ENCODE measurements at regions of chr10 and their contacts with region 1.

Region 1: GRCh38 chr10:93458821-93459257 is 23.3 kb downstream of the MYOF start:
- DNase-seq: peak; percentile 100
- H3K4me3 ChIP-seq: no peak overlapping the region
- H3K27me3 ChIP-seq: no peaks in the 10 kb centered on the region
- CTCF ChIP-seq: no peak

Region 2: GRCh38 chr10:92463582-92463981 is 995.3 kb before region 1 on chr10:
- CTCF ChIA-PET with region 1: no interaction called
- POLR2A ChIA-PET with region 1: interaction called, 11 read pairs
- DNase-seq: no peak
- H3K4me3 ChIP-seq: no peak overlapping the region
- H3K27me3 ChIP-seq: no peaks in the 10 kb centered on the region
- CTCF ChIP-seq: no peak

Region 3: GRCh38 chr10:93330824-93331223 is 128.0 kb before region 1 on chr10:
- CTCF ChIA-PET with region 1: no interaction called
- POLR2A ChIA-PET with region 1: no interaction called
- DNase-seq: no peak
- H3K4me3 ChIP-seq: no peak overlapping the region
- H3K27me3 ChIP-seq: no peaks in the 10 kb centered on the region
- CTCF ChIP-seq: no peak

Region 4: GRCh38 chr10:93437088-93437945 is 21.5 kb before region 1 on chr10:
- CTCF ChIA-PET with region 1: interaction called, 4 read pairs
- POLR2A ChIA-PET with region 1: interaction called, 20 read pairs
- DNase-seq: peak; percentile 99
- H3K4me3 ChIP-seq: no peak overlapping the region
- H3K27me3 ChIP-seq: no peaks in the 10 kb centered on the region
- CTCF ChIP-seq: no peak

Region 5: DNA sequence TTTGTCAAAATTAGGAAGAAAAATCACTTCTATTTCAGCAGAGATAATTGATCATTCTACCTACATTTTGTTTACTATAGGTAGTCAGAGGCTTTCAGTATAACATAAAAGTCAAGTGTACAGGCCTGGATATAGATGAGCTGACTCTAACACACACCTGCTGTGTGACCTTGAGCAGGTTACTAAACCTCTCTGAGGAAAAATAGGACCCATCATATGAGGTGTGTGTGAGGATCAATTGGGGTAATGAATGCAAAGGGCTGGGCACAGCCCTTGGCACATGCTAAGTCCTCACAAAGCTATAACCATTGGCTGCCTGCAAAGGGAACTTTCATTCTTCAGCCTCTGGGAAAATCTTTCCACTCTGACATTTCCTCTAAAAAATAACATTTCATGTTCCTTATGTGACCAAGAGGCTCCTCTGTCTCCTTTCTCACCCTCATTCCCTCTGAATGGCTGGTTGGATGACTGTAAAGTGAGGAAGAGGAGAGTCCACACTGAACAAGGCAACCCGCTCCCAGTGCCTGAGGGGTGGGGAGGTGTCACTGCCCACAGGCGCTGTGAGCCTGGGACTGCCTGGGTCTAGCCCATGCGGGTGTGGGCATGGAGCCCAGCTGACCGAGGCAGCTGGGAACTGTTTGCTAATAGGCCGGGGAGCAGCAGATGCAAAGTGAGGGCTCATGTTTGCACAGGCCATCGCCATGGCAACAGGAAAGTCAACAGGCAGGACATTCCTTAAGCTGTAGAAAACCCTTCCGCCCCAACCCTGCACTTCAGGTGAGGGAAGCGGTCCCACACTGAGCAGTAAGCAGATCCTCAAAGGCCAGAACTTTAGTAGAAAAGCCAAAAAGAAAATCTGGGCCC is 13.5 kb before region 1 on chr10:
- CTCF ChIA-PET with region 1: interaction called, 11 read pairs
- POLR2A ChIA-PET with region 1: interaction called, 9 read pairs
- DNase-seq: peak; percentile 97
- H3K4me3 ChIP-seq: no peak overlapping the region
- H3K27me3 ChIP-seq: no peaks in the 10 kb centered on the region
- CTCF ChIP-seq: no peak

Region 6: DNA sequence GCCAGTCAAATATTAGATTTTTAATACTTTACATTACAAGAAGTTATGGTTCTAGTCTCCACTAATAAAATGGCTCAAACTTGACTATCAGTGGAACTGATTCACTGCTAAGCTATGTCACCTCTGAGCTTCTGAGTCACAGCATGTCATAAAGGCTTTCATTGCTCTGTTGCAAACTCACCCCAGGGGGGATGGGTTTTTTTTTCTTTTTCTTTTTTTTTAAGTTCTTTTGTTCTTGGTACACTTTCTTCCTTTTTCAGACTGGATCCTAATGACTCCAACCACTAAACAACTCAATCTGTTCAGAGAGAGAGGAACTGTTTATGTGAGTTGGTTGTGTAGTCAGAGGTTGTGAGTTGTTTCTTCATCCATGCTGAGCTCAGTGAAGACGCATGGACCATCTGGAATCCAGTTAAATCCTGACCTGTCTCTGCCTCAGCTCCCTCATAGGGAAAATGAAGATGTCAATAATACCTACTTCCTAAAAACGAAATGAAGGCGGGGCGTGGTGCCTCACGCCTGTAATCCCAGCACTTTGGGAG is 12.3 kb after region 1 on chr10:
- CTCF ChIA-PET with region 1: interaction called, 8 read pairs
- POLR2A ChIA-PET with region 1: interaction called, 28 read pairs
- DNase-seq: peak; percentile 98
- H3K4me3 ChIP-seq: no peak overlapping the region
- H3K27me3 ChIP-seq: no peaks in the 10 kb centered on the region
- CTCF ChIP-seq: no peak